GM12878 (cell line): ENCODE measurements at regions of chr6 and their contacts with region 1.

Region 1: DNA sequence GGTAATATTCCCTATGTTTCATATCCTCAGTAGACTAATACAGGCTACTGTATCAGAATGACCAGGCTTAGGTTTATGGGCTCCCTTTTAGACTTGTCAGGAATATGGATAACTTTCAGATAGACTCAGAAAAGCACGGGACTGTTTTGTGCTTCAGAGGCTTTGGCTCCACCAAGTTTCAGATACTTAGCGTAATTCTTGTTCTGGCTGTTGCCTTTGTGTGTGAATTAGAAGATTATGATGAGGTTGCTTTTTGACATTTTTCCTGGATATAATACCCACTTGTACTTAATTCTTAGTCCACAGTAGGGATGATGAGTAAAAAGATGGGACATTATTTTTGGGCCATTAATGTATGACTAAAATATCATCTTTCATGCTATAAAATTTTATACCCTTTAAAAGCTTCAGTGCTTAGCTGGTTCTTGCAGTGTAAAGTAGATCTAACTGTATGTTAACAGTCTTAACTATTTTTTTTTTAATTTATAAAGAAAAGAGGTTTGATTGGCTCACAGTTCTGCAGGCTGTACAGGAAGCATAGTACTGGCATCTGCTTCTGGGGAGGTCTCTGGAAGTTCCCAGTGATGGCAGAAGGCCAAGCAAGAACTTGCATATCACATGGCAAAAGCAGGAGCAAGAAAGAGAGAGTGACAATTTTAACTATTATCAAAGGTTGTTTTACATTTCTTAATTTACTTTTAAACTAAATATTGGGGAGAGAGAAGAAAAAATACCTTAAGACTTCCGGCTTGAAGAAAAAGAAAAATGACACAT is 120.7 kb downstream of the ZFAND3 start:
- DNase-seq: no peak
- ATAC-seq: no peak
- H3K4me3 ChIP-seq: no peak overlapping the region
- H3K27ac ChIP-seq: no peak overlapping the region
- H3K4me1 ChIP-seq: peaks cover 24% of the 10 kb centered on the region
- H3K27me3 ChIP-seq: no peaks in the 10 kb centered on the region
- CTCF ChIP-seq: no peak
- EP300 ChIP-seq: no peak
- POLR2A ChIP-seq: no peak
- RAD21 ChIP-seq: no peak

Region 2: DNA sequence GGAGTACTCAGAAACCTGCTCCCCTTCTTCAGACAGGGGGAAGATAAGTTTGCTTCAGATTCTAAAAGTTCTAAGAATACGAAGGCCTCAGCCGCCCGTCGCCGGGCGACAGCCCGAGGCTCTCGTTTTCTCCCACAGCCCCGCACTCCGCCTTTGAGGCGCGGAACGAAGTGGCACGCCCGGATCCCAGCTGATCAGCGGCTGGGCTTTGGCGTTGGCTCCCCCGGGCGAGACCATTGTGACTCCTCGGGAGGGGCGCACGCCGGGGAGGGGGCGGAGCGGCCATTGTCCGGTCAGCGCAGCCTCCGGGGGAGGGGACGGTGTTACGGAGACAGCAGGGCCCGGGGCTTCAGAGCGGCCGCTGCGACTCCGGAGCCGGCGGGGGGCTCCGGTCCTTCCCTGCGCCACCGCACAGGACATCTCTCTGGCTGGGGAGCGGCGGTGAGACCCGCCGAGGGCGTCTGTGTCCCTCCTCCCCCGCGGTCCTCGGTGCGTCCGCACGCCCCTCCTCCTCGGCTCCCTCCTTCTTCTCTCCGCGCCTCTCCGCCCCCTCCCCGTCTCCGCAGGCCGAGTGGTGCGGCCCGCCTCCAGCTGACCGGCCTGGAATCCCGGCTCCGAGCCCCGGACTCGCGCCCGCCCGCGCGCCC is 121.0 kb before region 1 on chr6 and contains the start of gene ZFAND3:
- CTCF ChIA-PET with region 1: no interaction called
- POLR2A ChIA-PET with region 1: interaction called, 3 read pairs
- RAD21 ChIA-PET with region 1: interaction called, 4 read pairs
- SMC1A ChIA-PET with region 1: interaction called, 6 read pairs
- in situ Hi-C with region 1: no loop called
- intact Hi-C with region 1: loop called (anchors 5 kb)
- DNase-seq: peak; percentile 86
- ATAC-seq: peak; percentile 89
- H3K4me3 ChIP-seq: peak within 1 kb of the TSS; percentile 96
- H3K27ac ChIP-seq: peak within 1 kb of the TSS; percentile 98
- H3K4me1 ChIP-seq: peaks cover 7% of the 10 kb centered on the region
- H3K27me3 ChIP-seq: no peaks in the 10 kb centered on the region
- CTCF ChIP-seq: no peak
- EP300 ChIP-seq: peak in 1 of 2 experiments; percentile 31; a peak in 1 of 4 replicates
- POLR2A ChIP-seq: peak; percentile 59; the same call in 1 of the 2 replicates
- RAD21 ChIP-seq: no peak
- polyA plus RNA-seq, gene ZFAND3: 0.90 to 1.8 TPM

Region 3: GRCh38 chr6:37922563-37922962 is 17.7 kb before region 1 on chr6:
- CTCF ChIA-PET with region 1: interaction called, 6 read pairs
- POLR2A ChIA-PET with region 1: no interaction called
- RAD21 ChIA-PET with region 1: interaction called, 4 read pairs
- SMC1A ChIA-PET with region 1: interaction called, 11 read pairs
- in situ Hi-C with region 1: no loop called
- intact Hi-C with region 1: no loop called
- DNase-seq: no peak
- ATAC-seq: no peak
- H3K4me3 ChIP-seq: no peak overlapping the region
- H3K27ac ChIP-seq: no peak overlapping the region
- H3K4me1 ChIP-seq: 0 out of 2 replicates have a peak, but pooled peaks cover 9% of the 10 kb centered on the region
- H3K27me3 ChIP-seq: no peaks in the 10 kb centered on the region
- CTCF ChIP-seq: no peak
- EP300 ChIP-seq: no peak
- POLR2A ChIP-seq: no peak
- RAD21 ChIP-seq: no peak

Region 4: DNA sequence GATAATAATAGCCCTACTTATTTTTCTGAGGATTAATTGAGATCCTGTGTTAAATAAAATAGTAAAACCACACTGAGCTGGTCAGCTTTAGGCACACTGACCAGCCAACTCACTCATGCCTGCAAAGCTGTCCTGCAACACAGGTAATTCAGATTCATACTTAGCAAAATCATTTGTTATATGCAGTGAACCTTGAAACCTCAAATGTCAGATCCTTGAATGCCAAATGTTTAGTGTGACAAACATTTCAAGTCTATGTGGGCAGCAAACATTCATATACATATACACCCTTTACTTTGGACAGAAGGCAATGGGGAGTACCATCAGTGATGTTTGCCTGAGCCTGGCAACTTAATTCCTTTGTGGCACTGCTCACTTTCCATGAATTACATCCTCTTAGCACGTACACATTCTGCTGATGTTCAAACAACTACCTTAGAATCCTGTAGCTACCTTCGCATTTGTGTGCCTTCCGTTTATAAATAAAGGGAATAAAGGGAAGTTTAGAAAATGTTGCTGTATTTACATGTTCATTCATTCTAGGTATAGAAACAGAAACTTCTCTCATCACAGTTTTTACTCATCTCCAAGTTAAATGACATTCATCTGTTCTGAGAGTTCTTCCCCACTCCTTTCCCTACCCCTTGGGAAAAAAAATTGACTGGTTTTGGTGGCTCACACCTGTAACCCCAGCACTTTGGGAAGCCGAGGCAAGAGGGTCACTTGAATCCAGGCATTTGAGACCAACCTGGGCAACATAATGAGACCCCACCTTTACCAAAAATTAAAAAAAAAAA is 20.1 kb after region 1 on chr6:
- CTCF ChIA-PET with region 1: interaction called, 5 read pairs
- POLR2A ChIA-PET with region 1: no interaction called
- RAD21 ChIA-PET with region 1: interaction called, 4 read pairs
- SMC1A ChIA-PET with region 1: interaction called, 11 read pairs
- in situ Hi-C with region 1: no loop called
- intact Hi-C with region 1: no loop called
- DNase-seq: peak; percentile 44
- ATAC-seq: peak; percentile 83
- H3K4me3 ChIP-seq: no peak overlapping the region
- H3K27ac ChIP-seq: no peak overlapping the region; the same call in 1 of the 2 replicates
- H3K4me1 ChIP-seq: peaks cover 19% of the 10 kb centered on the region
- H3K27me3 ChIP-seq: no peaks in the 10 kb centered on the region
- CTCF ChIP-seq: no peak
- EP300 ChIP-seq: no peak
- POLR2A ChIP-seq: no peak
- RAD21 ChIP-seq: no peak